ENCODE measurements at regions of chr10 and their contacts with region 1.

Region 1: DNA sequence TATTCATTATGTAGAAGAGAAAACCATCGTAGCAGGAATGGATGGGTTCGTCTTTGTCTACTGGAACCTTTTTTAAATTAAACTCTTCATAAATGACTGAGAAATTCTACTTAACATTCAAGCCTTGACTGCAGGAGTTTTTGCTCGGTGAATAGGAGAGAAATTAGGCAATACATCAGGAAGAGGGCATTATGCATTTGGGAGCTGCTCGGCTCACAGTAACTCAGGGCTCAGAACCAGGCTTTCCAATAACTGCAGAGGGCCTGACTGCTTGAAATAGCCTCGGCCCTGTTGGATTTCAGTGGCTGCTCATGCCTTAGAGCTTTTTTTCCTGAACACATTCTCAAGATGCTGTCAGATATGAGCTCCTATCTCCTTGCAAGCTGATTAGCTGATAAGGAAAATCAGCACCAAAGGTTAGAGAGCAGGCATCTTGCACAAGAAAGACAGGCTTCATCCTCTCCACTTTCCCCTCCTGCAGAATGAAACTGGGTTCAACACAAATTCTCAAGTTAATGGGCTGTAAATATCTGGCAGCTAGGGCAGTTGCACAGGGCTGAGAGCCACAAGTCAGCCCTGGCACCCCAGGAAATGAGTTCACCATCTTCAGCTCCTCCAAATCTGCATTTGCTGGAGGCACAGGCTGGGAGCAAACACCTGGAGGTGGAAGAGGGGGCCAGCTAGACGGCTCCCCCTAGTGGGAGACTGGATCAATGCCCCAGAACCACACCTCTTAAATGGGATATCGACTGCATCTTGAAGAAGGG is 24.3 kb downstream of the TECTB start:
- DNase-seq: peak in 1 of 2 donors; percentile 24
- ATAC-seq: peak; percentile 69 to 91 (median 82)
- H3K4me3 ChIP-seq: no peak overlapping the region
- H3K27ac ChIP-seq: no peak overlapping the region
- H3K4me1 ChIP-seq: no peaks in the 10 kb centered on the region
- H3K27me3 ChIP-seq: no peaks in the 10 kb centered on the region
- CTCF ChIP-seq: peak; percentile 70

Region 2: GRCh38 chr10:110414563-110415309 is 1892.8 kb before region 1 on chr10:
- intact Hi-C with region 1: no loop called
- DNase-seq: no peak
- ATAC-seq: peak in 3 of 4 donors; percentile 28 to 41 (median 40)
- H3K4me3 ChIP-seq: no peak overlapping the region
- H3K27ac ChIP-seq: no peak overlapping the region
- H3K4me1 ChIP-seq: no peaks in the 10 kb centered on the region
- H3K27me3 ChIP-seq: no peaks in the 10 kb centered on the region
- CTCF ChIP-seq: no peak

Region 3: GRCh38 chr10:111030042-111030750 is 1277.3 kb before region 1 on chr10:
- intact Hi-C with region 1: no loop called
- DNase-seq: no peak
- ATAC-seq: no peak
- H3K4me3 ChIP-seq: no peak overlapping the region
- H3K27ac ChIP-seq: no peak overlapping the region
- H3K4me1 ChIP-seq: no peaks in the 10 kb centered on the region
- H3K27me3 ChIP-seq: no peaks in the 10 kb centered on the region
- CTCF ChIP-seq: no peak

Region 4: GRCh38 chr10:111707076-111707475 is 600.5 kb before region 1 on chr10:
- intact Hi-C with region 1: no loop called
- DNase-seq: no peak
- ATAC-seq: no peak
- H3K4me3 ChIP-seq: no peak overlapping the region
- H3K27ac ChIP-seq: no peak overlapping the region
- H3K4me1 ChIP-seq: no peaks in the 10 kb centered on the region
- H3K27me3 ChIP-seq: no peaks in the 10 kb centered on the region
- CTCF ChIP-seq: no peak

Region 5: DNA sequence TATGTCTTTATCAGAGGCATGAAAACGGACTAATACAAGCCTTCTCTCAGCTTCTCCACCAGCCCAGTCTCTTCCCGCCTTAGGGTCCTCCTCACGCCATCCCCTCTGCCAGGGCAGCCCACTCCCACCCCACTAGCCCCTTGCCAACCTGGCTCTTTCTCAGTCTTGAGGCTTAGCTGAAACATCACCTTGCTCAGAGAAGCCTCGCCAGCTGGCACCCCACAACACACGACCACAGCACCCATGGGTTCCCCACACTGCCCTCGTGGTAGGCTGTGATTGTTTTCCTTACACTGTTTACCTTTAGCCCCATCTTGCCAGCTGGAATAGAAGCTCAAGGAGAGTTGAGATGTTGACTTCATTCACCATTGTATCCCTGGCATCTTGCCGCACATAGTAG is 168.4 kb before region 1 on chr10:
- intact Hi-C with region 1: loop called in 1 of 2 experiments (anchors 2 kb)
- DNase-seq: no peak
- ATAC-seq: no peak
- H3K4me3 ChIP-seq: no peak overlapping the region
- H3K27ac ChIP-seq: no peak overlapping the region
- H3K4me1 ChIP-seq: no peaks in the 10 kb centered on the region
- H3K27me3 ChIP-seq: no peaks in the 10 kb centered on the region
- CTCF ChIP-seq: no peak

Region 6: GRCh38 chr10:112173206-112173605 is 134.3 kb before region 1 on chr10:
- intact Hi-C with region 1: no loop called
- DNase-seq: no peak
- ATAC-seq: no peak
- H3K4me3 ChIP-seq: no peak overlapping the region
- H3K27ac ChIP-seq: no peak overlapping the region
- H3K4me1 ChIP-seq: peaks cover 9% of the 10 kb centered on the region
- H3K27me3 ChIP-seq: no peaks in the 10 kb centered on the region
- CTCF ChIP-seq: no peak

Region 7: GRCh38 chr10:112183329-112184051 is 124.1 kb before region 1 on chr10 and contains the start of gene GPAM:
- intact Hi-C with region 1: loop called (anchors 5 kb)
- DNase-seq: peak; percentile 95 to 98
- ATAC-seq: peak; percentile 98 to 100 (median 99)
- H3K4me3 ChIP-seq: peak within 1 kb of the TSS; percentile 73
- H3K27ac ChIP-seq: peak within 1 kb of the TSS; percentile 92
- H3K4me1 ChIP-seq: peaks cover 13% of the 10 kb centered on the region
- H3K27me3 ChIP-seq: no peaks in the 10 kb centered on the region
- CTCF ChIP-seq: no peak
- total RNA-seq, gene GPAM: 10.2 to 20.1 (median 12.6) TPM

Region 8: DNA sequence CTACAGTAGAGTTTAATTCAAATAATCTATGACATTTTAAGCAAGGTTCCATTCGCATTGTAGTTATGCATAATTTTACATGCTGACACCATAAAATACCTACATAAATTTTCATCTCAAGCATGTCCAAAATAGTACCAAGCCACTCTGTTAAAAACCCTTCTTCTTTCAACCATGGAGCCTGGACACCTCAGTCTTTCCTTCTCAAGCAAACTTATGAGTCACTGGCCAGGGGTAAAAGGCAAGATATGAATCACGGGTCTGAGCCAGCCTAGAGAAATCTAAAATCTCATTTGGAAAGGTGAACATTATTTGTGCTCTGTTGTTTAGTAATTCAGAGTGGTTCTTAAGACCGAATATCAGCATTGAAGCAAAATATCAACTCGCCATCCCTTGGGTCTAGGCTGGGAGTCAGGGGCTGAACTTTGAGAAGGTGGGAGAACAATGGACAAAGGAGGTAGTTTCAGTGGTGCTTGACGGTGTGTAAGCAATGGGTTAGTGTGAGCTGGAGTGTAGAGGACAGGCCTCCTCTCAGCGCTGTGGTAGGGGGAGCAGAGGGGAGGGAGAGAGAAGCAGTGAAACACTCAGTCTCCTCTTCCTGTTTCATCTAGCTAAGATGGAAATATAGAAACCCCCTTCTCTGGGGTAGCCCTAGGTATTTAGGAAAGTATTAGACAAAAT is 104.8 kb before region 1 on chr10:
- intact Hi-C with region 1: loop called in 1 of 2 experiments (anchors 5 kb)
- DNase-seq: no peak
- ATAC-seq: no peak
- H3K4me3 ChIP-seq: no peak overlapping the region
- H3K27ac ChIP-seq: no peak overlapping the region
- H3K4me1 ChIP-seq: peaks cover 11% of the 10 kb centered on the region
- H3K27me3 ChIP-seq: no peaks in the 10 kb centered on the region
- CTCF ChIP-seq: no peak